Endothelial cell of umbilical vein (primary cell): ENCODE measurements at regions of chr9 and their contacts with region 1.

Region 1: DNA sequence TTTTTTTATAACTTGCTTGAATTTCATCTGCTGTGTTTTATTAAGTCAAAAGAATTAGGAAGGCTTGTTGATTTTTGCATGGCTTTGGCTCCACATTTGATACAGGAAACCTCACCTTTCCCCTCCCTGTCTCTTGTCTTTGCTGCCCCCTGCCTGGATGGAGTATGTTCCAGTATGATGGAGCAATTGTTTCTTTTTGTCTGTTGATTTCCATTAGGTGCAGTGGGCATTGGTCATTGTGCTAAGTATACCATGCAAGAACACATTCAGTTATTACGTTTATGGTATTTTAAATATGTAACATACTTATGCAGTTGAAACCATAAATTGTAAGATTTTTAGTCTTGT is 19.6 kb downstream of the TJP2 start:
- DNase-seq: peak; percentile 35
- H3K4me3 ChIP-seq: no peak overlapping the region
- H3K27ac ChIP-seq: no peak overlapping the region
- H3K4me1 ChIP-seq: peaks cover 14% of the 10 kb centered on the region
- H3K27me3 ChIP-seq: no peaks in the 10 kb centered on the region
- CTCF ChIP-seq: no peak
- POLR2A ChIP-seq: no peak

Region 2: GRCh38 chr9:69035438-69036308 is 158.0 kb before region 1 on chr9 and contains the start of gene FXN:
- CTCF ChIA-PET with region 1: interaction called, 63 read pairs
- POLR2A ChIA-PET with region 1: interaction called, 3 read pairs
- dilution Hi-C with region 1: no loop called
- intact Hi-C with region 1: loop called (anchors 1 kb)
- DNase-seq: peak; percentile 85
- H3K4me3 ChIP-seq: peak within 1 kb of the TSS; percentile 44 to 81 (median 67)
- H3K27ac ChIP-seq: peak within 1 kb of the TSS; percentile 31
- H3K4me1 ChIP-seq: peaks cover 18% of the 10 kb centered on the region
- H3K27me3 ChIP-seq: no peaks in the 10 kb centered on the region
- CTCF ChIP-seq: peak; percentile 99 to 100
- POLR2A ChIP-seq: peak; percentile 52
- total RNA-seq, gene FXN: 17.1 and 21.2 TPM in 2 replicates

Region 3: GRCh38 chr9:69097064-69097463 is 96.6 kb before region 1 on chr9:
- CTCF ChIA-PET with region 1: interaction called, 7 read pairs
- POLR2A ChIA-PET with region 1: no interaction called
- dilution Hi-C with region 1: no loop called
- intact Hi-C with region 1: loop called (anchors 1 kb)
- DNase-seq: peak; percentile 93
- H3K4me3 ChIP-seq: no peak overlapping the region
- H3K27ac ChIP-seq: peak overlapping the region; percentile 89
- H3K4me1 ChIP-seq: peaks cover 41% of the 10 kb centered on the region
- H3K27me3 ChIP-seq: no peaks in the 10 kb centered on the region
- CTCF ChIP-seq: no peak
- POLR2A ChIP-seq: peak; percentile 82

Region 4: GRCh38 chr9:69136779-69137178 is 56.9 kb before region 1 on chr9:
- CTCF ChIA-PET with region 1: interaction called, 21 read pairs
- POLR2A ChIA-PET with region 1: interaction called, 3 read pairs
- dilution Hi-C with region 1: no loop called
- intact Hi-C with region 1: no loop called
- DNase-seq: peak; percentile 49
- H3K4me3 ChIP-seq: no peak overlapping the region
- H3K27ac ChIP-seq: peak overlapping the region; percentile 38
- H3K4me1 ChIP-seq: peaks cover 12% of the 10 kb centered on the region
- H3K27me3 ChIP-seq: no peaks in the 10 kb centered on the region
- CTCF ChIP-seq: no peak
- POLR2A ChIP-seq: no peak

Region 5: GRCh38 chr9:69155341-69156030 is 38.2 kb before region 1 on chr9:
- CTCF ChIA-PET with region 1: interaction called, 108 read pairs
- POLR2A ChIA-PET with region 1: no interaction called
- dilution Hi-C with region 1: no loop called
- intact Hi-C with region 1: loop called (anchors 2 kb)
- DNase-seq: no peak
- H3K4me3 ChIP-seq: no peak overlapping the region
- H3K27ac ChIP-seq: no peak overlapping the region
- H3K4me1 ChIP-seq: peaks cover 1% of the 10 kb centered on the region
- H3K27me3 ChIP-seq: no peaks in the 10 kb centered on the region
- CTCF ChIP-seq: no peak
- POLR2A ChIP-seq: no peak

Region 6: GRCh38 chr9:69180670-69181069 is 13.0 kb before region 1 on chr9:
- CTCF ChIA-PET with region 1: interaction called, 46 read pairs
- POLR2A ChIA-PET with region 1: interaction called, 6 read pairs
- dilution Hi-C with region 1: no loop called
- intact Hi-C with region 1: no loop called
- DNase-seq: peak; percentile 98
- H3K4me3 ChIP-seq: peak overlapping the region in 1 of 3 experiments; percentile 36
- H3K27ac ChIP-seq: peak overlapping the region; percentile 98
- H3K4me1 ChIP-seq: peaks cover 51% of the 10 kb centered on the region
- H3K27me3 ChIP-seq: no peaks in the 10 kb centered on the region
- CTCF ChIP-seq: no peak
- POLR2A ChIP-seq: no peak